MCF 10A (cell line): ENCODE measurements at regions of chr6 and their contacts with region 1.

Region 1: DNA sequence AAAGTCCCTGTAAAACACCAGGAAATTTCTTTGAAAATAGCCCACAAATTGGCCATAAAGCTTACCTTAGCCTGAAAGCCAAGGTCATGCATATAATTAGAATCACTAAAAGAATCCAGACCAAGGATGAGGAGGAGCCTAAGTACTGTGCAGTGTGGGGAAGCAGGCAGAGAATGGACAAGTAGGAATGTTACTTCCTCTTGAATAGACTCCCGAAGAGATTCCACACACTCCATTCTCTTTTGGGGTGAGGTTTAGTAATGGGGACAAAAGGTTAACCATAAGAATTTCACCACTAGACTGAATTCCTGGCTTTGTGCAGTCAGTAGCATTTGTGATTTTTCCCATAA is 27.5 kb upstream of the MARCKS start:
- DNase-seq: no peak
- H3K4me3 Mint-ChIP-seq: no peak overlapping the region
- H3K27ac Mint-ChIP-seq: no peak overlapping the region
- H3K4me1 Mint-ChIP-seq: no peaks in the 10 kb centered on the region
- H3K27me3 Mint-ChIP-seq: no peaks in the 10 kb centered on the region
- CTCF ChIP-seq: no peak

Region 2: GRCh38 chr6:113763883-113764282 is 65.8 kb before region 1 on chr6:
- CTCF ChIA-PET with region 1: no interaction called
- POLR2A ChIA-PET with region 1: no interaction called
- intact Hi-C with region 1: loop called (anchors 10 kb)
- DNase-seq: peak; percentile 92
- H3K4me3 Mint-ChIP-seq: no peak overlapping the region
- H3K27ac Mint-ChIP-seq: peak overlapping the region; percentile 81
- H3K4me1 Mint-ChIP-seq: peaks cover 14% of the 10 kb centered on the region
- H3K27me3 Mint-ChIP-seq: no peaks in the 10 kb centered on the region
- CTCF ChIP-seq: no peak